Prostate gland (tissue), 2 donors: ENCODE measurements at regions of chr4 and their contacts with region 1.

Region 1: GRCh38 chr4:21790438-21791029 is 158.0 kb downstream of the KCNIP4 start:
- DNase-seq: no peak
- H3K4me3 ChIP-seq: no peak overlapping the region
- H3K27ac ChIP-seq: no peak overlapping the region
- H3K4me1 ChIP-seq: no peaks in the 10 kb centered on the region
- H3K27me3 ChIP-seq: no peaks in the 10 kb centered on the region
- CTCF ChIP-seq: peak in 3 of 4 experiments; percentile 39 to 68 (median 56)
- POLR2A ChIP-seq: no peak

Region 2: DNA sequence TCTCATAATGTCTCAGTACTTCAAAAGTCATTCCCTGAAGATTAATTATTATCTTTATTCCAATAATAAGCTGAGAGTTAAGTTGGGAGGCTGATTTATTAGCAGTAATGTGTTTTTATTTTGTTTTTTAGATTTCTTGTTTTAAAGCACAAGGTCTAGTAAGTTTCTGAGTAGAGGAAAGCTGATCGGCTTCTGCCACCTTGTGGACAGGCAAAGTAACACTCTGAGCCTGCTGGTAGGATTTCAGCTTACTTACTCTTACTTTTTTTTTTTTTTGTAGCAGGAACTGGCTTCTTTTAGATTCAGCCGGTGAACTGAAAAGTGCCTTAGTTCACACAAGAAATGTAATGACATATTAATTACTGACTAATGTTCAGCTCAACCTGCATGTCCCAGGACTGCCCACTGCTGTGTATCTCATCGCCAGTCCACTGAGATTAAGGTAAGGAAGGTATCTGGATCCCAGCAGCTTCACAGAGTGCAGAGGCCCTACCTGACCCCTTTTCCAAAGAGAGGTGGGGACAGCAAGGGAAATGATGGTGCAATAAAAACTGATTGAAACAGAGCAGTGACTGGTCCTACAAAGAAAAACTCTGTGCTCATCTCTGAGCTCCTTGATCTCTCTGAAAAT is 598.8 kb after region 1 on chr4:
- intact Hi-C with region 1: loop called (anchors 2 kb)
- DNase-seq: peak; percentile 21
- H3K4me3 ChIP-seq: no peak overlapping the region
- H3K27ac ChIP-seq: no peak overlapping the region
- H3K4me1 ChIP-seq: no peaks in the 10 kb centered on the region
- H3K27me3 ChIP-seq: no peaks in the 10 kb centered on the region
- CTCF ChIP-seq: peak; percentile 64 to 77 (median 68)
- POLR2A ChIP-seq: no peak

Region 3: DNA sequence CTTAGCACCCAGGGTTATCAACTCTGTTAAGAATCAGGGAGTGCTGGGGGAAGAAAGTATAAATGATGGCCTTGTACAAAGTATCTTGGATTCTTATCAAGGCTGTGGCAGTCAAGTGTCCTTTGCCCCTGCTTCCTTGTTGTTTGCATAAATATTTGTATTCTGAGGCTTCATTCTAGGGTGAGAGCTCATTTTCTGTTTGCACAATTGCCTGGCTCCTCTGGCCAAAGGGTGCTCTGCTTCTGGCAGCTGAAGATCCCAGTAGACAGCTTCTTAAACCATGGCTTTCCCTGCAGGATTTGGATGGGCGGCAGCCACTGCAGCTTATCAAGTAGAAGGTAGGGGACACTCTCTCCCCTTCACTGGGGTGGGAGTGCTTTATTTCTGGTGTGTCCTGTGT is 902.2 kb after region 1 on chr4 and contains the start of gene GBA3:
- intact Hi-C with region 1: loop called (anchors 5 kb)
- DNase-seq: no peak
- H3K4me3 ChIP-seq: no peak within 1 kb of the TSS
- H3K27ac ChIP-seq: no peak within 1 kb of the TSS
- H3K4me1 ChIP-seq: no peaks in the 10 kb centered on the region
- H3K27me3 ChIP-seq: no peaks in the 10 kb centered on the region
- CTCF ChIP-seq: no peak
- POLR2A ChIP-seq: no peak
- total RNA-seq, gene GBA3: 0.68 to 0.97 TPM